GM10248 (cell line): ENCODE measurements at regions of chr19 and their contacts with region 1.

Region 1: DNA sequence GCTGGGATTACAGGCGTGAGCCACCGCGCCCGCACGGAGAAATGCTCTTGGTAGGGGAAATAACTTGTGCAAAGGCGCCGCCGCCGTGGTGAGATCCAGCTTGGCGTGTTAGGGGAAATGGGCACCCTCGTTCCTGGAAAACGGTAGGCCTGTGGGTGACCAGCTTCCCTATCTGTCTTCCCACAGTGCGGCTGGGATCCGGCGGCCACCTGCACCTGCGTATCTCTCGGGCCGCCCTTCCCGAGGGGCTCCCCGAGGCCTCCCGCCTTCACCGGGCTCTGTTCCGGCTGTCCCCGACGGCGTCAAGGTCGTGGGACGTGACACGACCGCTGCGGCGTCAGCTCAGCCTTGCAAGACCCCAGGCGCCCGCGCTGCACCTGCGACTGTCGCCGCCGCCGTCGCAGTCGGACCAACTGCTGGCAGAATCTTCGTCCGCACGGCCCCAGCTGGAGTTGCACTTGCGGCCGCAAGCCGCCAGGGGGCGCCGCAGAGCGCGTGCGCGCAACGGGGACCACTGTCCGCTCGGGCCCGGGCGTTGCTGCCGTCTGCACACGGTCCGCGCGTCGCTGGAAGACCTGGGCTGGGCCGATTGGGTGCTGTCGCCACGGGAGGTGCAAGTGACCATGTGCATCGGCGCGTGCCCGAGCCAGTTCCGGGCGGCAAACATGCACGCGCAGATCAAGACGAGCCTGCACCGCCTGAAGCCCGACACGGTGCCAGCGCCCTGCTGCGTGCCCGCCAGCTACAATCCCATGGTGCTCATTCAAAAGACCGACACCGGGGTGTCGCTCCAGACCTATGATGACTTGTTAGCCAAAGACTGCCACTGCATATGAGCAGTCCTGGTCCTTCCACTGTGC is 2.4 kb downstream of the GDF15 start:
- DNase-seq: peak; percentile 93
- CTCF ChIP-seq: peak; percentile 100

Region 2: DNA sequence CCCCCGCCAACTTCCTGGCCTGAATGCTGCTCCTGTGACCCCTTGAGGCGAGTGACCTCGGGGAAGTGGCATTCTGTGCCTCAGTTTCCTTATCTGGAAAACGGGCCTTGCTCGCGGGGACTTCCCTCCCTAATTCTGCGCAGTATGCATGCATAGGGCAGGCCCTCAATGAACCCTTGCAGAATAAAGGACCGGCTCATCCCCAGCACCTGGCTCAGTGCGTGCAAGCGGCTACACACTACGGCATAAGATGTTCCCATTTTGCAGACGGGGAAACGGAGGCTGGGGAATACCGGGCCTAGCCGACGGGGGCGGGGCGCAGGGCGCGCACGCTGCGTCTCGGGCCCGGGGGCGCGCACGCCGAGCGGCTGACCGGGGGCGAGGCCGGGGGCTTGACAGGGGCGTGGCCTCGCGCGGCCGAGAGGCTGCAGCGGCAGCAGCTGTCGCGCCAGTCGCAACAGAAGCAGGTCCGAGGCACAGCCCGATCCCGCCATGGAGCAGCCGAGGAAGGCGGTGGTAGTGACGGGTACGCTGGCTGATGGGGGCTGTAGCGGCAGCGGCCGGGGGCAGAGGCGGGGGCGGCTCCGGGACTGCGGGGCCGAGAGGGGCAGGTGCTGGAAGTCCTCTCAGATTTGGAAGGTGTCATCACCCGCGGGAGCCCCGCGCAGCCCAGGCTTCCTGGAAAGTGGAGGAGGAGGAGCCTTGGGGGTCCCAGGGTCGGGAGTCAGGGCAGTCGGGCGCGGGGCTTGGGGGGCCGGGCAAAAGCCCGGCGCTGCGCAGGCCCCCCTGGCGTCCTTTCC is 47.9 kb before region 1 on chr19 and contains the start of gene PGPEP1:
- CTCF ChIA-PET with region 1: interaction called, 23 read pairs
- POLR2A ChIA-PET with region 1: no interaction called
- DNase-seq: peak; percentile 91
- CTCF ChIP-seq: no peak

Region 3: DNA sequence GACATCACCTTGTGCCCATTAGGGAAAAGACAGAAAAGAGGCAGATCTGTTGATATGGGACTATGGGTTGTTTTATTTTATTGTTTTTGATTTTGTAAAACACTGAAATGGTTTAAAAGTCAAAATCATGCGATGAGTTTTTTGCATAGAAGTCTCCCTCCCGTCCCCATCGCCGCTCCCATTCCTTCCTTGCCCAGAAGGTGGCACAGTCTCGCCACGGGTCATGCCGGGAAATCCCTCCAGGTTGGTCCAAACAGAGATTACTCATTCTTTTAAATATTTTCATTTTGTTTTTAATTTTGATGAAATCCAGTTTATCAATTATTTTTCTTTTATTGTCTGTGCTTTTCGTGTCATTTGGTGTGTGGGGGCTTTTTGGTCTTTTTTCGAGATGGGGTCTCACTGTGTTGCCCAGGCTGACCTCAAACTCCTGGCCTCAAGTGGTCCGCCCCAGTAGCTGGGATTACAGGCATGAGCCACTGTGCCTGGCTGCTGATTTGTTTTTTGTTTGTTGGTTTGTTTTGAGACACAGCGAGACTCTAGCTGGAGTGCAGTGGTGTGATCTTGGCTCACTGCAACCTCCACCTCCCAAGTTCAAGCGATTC is 38.7 kb before region 1 on chr19:
- CTCF ChIA-PET with region 1: interaction called, 23 read pairs
- POLR2A ChIA-PET with region 1: no interaction called
- DNase-seq: peak; percentile 68
- CTCF ChIP-seq: peak; percentile 67

Region 4: DNA sequence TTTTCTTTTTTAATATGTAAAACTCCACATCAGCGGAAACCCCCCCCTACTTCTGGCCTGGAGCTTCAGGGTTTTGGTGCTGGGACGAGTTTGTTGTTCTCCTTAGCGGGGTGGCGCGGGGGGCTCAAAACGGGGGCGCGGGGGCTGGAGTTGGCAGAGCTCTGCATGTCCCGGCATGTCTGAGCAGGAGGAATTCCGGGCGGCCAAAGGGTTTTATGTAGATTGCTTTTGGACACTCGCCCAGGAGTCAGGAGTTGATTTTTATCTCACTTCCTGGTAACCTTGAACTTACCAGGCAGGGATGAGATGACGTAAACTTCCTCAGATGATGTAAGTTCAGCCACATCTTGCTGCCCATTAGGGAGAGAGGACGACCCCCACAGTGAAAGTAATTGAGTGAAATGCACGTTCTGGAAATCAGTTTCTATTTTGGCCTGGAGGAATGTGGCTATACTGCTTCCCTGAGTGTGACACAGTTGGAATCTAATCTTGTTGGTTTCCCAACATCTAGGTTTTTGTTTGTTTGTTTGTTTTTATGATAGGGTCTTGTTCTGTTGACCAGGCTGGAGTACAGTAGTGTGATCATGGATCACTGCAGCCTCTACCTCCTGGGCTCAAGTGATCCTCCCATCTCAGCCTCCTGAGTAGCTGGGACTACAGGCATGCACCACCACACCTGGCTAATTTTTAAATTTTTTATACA is 23.4 kb before region 1 on chr19:
- CTCF ChIA-PET with region 1: interaction called, 34 read pairs
- POLR2A ChIA-PET with region 1: no interaction called
- DNase-seq: no peak
- CTCF ChIP-seq: no peak

Region 5: DNA sequence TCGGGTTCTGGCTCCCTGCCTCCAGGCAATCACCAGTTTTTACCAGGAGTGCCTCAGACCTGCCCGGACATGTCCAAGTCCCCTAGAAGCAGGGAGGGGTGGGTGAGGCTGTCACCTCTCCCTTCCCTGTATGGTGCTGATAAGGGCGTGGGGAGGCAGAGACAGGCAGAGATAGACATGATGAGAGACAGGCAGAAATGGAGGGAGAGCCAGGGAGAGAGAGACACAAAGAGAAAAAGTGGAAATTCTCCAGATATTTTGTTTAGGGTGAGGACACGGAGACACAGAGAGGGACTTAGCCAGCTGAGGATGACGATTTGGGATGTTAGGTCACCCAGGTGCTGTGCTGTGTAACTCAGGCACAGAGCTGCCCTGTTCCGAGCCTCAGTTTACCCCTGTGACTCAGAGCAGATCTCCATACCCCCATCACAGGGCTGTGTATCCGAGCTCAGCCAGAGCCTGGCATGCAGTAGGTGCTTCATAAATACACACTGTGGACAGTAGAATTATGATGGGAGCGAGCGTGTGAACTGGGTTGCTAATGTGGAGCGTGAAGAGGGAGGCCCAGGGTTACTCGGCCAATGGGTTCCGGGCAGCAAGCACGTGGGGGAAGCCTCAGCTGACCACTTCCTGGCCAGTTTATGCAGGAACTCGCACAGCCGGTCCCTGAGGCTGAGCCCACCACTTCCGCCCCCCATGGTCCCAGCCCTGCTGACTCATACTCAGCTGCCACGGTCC is 14.3 kb before region 1 on chr19:
- CTCF ChIA-PET with region 1: interaction called, 23 read pairs
- POLR2A ChIA-PET with region 1: interaction called, 4 read pairs
- DNase-seq: peak; percentile 94
- CTCF ChIP-seq: no peak

Region 6: DNA sequence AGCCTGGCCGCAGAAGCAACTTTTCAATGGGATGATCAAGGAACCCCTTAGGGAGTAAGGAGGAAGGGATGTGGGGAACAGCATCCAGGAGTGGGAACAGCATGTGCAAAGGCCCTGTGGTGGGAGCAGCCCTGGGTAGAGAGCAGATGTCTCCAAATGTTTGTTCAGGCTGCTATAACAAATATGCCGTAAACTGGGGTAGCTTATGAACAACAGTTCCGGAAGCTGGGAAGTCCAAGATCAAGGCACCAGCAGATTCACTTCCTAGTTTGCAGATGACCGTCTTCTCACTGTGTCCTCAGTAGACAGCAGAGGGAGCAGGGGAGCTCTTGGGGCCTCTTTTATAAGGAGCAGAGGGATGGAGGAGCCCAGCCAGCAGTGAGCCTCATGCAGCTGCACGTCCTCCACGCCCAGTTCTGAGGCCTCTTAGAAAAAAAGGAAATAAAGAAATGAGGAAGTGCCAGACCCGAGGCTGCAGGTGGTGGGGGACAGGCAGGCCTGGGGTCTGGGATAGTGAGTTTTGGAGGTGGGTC is 13.3 kb after region 1 on chr19:
- CTCF ChIA-PET with region 1: interaction called, 181 read pairs
- POLR2A ChIA-PET with region 1: interaction called, 4 read pairs
- DNase-seq: peak; percentile 69
- CTCF ChIP-seq: peak; percentile 39

Region 7: DNA sequence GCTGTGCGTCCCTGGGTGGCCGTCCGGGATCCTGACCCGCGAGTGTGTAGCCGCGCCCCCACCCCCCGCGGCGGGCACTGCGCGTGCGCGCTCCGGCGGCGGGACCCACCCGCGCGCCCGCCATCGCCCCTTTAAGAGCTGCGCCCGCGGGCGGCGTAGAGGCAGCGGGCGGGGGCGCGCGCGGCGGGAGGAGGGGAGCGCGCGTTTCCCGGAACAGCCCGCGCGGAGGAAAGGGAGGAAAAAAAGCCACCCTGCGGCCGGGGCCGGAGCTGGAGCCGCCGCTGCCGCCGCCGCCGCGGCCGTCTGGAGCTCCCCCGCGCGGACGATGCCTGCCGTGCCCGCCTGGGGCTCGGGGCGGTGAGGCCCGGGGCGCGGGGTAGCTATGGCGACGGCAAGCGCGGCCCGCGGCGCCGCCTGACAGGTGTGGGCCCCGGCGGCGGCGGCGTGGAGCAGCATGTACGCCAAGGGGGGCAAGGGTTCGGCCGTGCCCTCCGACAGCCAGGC is 30.9 kb after region 1 on chr19 and contains the start of gene SSBP4:
- CTCF ChIA-PET with region 1: interaction called, 380 read pairs
- POLR2A ChIA-PET with region 1: interaction called, 3 read pairs
- DNase-seq: peak; percentile 91
- CTCF ChIP-seq: peak; percentile 30